ENCODE measurements at regions of chr11 and their contacts with region 1.

Region 1: DNA sequence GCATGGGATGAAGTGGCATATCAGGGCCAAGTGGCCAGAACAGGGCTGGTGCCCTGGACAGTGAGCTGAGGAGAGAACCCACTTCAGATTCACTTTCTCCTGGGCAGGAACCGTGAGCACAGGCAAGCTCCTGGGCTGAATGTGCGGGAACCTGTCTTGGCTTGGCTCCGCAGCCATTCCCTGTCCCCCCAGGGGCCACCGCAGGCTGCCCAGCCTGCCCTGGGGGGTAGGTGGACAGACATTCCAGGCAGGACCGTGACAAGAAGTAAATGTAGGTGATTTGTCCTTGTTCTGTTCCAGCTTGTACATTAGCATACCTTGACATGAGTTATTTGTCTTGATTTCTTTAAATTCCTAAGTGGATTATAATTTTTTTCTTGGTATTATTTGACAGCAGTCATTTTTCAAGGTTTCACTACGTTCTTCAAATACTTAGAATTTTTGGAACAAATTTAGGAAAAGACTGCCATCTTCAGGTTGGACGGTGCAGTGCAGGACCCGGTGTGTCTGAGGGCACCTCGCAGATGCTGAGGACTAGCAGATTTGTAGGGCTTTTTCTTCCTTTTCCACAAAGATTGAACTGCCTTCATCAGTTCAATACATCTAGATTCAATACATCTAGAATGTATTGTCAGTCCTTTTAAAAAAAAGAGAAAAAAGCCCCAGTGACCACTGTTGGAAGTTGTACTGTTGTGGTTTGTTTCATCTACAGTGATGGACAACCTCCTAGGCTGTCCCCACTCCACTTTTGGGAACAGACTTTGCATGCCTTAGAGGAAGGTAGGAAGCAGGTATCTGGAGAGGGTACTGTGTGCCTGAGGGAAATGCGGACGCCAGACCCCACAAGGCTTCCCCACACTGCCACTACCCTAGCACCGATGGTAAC is 115.1 kb upstream of the RASSF10 start:
- DNase-seq: peak in 7 of 9 donors; percentile 12 to 53 (median 39)
- ATAC-seq: peak; percentile 55
- H3K4me3 ChIP-seq: no peak overlapping the region
- H3K4me3 Mint-ChIP-seq: no peak overlapping the region
- H3K27ac ChIP-seq: no peak overlapping the region
- H3K27ac Mint-ChIP-seq: no peak overlapping the region
- H3K4me1 ChIP-seq: no peaks in the 10 kb centered on the region
- H3K4me1 Mint-ChIP-seq: no peaks in the 10 kb centered on the region
- H3K27me3 ChIP-seq: no peaks in the 10 kb centered on the region
- H3K27me3 Mint-ChIP-seq: peaks cover 17 to 29% (median 22%) of the 10 kb centered on the region in 5 donors

Region 2: GRCh38 chr11:12043959-12044819 is 849.8 kb before region 1 on chr11:
- CTCF ChIA-PET with region 1: no interaction called
- POLR2A ChIA-PET with region 1: no interaction called
- intact Hi-C with region 1: loop called (anchors 1 to 10 kb)
- DNase-seq: peak; percentile 17 to 64 (median 44)
- ATAC-seq: peak; percentile 74
- H3K4me3 ChIP-seq: no peak overlapping the region
- H3K4me3 Mint-ChIP-seq: no peak overlapping the region
- H3K27ac ChIP-seq: no peak overlapping the region
- H3K27ac Mint-ChIP-seq: peak overlapping the region in 1 of 9 donors; percentile 58
- H3K4me1 ChIP-seq: peaks cover 0 to 3% of the 10 kb centered on the region in 2 donors
- H3K4me1 Mint-ChIP-seq: peaks cover 0 to 9% (median 0%) of the 10 kb centered on the region in 7 donors
- H3K27me3 ChIP-seq: no peaks in the 10 kb centered on the region
- H3K27me3 Mint-ChIP-seq: peaks cover 0 to 7% (median 0%) of the 10 kb centered on the region in 5 donors

Region 3: DNA sequence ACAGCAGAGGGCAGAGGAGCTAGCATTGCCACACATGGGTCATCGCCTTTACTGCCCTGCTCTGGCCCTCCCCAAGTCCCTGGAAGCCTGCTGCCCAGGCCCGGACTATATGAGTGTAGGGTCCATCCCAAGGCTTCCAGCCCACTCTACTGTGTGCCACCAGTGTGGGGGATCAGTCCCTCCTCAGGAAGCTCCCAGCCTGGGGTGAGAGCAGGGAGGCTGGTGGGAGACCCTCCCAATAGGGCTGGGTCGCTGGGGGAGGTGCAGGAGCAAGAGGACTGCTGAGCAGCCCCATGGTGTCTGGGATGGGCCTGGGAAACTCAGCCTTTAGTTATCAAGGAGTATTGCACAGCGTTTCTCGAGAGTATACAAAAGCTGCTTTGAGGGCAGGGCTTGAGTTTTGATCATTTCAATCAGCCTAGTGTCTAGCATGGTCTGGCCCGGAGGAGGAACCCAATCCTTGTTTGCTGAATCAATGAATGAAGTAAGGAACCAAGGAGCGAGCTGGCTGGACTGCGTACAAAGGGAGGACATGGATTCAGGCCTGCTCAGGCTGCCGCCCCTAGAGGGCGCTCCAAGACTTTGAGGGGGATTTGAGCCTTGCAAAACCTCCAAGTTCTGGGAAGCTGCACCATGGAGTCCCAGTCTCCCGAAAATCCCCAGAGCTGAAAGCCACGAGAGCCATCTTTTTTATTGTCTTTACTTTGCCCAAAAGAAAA is 605.7 kb before region 1 on chr11:
- CTCF ChIA-PET with region 1: interaction called, 18 read pairs
- POLR2A ChIA-PET with region 1: interaction called, 4 read pairs
- intact Hi-C with region 1: loop called (anchors 1 kb)
- DNase-seq: peak in 6 of 9 donors; percentile 13 to 59 (median 30)
- ATAC-seq: peak; percentile 50
- H3K4me3 ChIP-seq: no peak overlapping the region
- H3K4me3 Mint-ChIP-seq: no peak overlapping the region
- H3K27ac ChIP-seq: no peak overlapping the region
- H3K27ac Mint-ChIP-seq: no peak overlapping the region
- H3K4me1 ChIP-seq: peaks cover 5 to 6% of the 10 kb centered on the region in 2 donors
- H3K4me1 Mint-ChIP-seq: peaks cover 5 to 19% (median 14%) of the 10 kb centered on the region in 7 donors
- H3K27me3 ChIP-seq: no peaks in the 10 kb centered on the region
- H3K27me3 Mint-ChIP-seq: no peaks in the 10 kb centered on the region

Region 4: DNA sequence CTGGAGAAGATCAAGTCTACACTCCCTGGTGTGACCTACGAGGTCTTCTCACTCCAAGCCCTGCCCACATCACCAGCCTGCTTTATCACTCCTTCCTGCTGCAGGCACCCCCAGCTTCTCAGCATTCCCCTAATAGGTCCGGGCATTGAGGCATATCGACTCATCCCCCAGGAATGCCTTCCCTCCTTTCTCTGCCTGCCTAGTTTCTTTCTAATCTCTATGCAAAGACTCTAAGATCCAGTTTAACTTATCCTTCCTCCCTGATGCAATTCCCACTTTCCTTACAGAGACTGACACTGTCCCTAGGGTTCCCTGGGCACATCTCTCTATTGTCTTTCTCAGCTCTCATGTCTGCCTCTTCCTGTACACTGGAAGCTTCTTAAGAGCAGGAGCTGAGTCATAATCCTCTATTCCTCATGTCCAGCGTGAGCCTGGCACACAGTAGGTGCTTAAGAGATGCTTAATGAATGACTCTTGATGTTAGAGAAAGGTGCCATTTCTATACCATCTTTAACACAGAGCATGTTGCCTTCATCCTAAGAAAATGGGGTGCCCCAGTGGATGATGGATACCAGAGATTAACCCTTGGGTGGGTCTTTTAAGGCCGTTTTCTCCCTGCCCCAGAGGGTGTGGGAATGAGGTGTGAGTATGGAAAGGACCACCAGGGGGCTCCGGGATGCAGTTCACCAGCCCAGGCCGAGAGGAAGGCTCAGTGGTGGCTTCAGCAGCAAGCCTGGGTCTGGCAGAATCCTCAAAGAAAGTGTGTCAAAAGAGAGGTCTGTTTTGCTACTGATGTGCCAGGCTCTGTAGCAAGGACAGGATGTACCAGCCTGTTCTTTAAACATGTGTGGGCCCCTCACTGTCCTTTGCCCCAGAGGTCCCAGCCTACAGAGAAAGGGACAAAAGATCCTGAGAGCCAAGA is 482.0 kb before region 1 on chr11:
- CTCF ChIA-PET with region 1: interaction called, 3 read pairs
- POLR2A ChIA-PET with region 1: no interaction called
- intact Hi-C with region 1: loop called in 1 of 2 experiments (anchors 5 kb)
- DNase-seq: peak in 5 of 9 donors; percentile 8 to 27 (median 22)
- ATAC-seq: no peak
- H3K4me3 ChIP-seq: no peak overlapping the region
- H3K4me3 Mint-ChIP-seq: no peak overlapping the region
- H3K27ac ChIP-seq: no peak overlapping the region
- H3K27ac Mint-ChIP-seq: no peak overlapping the region
- H3K4me1 ChIP-seq: no peaks in the 10 kb centered on the region
- H3K4me1 Mint-ChIP-seq: no peaks in the 10 kb centered on the region
- H3K27me3 ChIP-seq: no peaks in the 10 kb centered on the region
- H3K27me3 Mint-ChIP-seq: peaks cover 0 to 19% (median 15%) of the 10 kb centered on the region in 5 donors

Region 5: DNA sequence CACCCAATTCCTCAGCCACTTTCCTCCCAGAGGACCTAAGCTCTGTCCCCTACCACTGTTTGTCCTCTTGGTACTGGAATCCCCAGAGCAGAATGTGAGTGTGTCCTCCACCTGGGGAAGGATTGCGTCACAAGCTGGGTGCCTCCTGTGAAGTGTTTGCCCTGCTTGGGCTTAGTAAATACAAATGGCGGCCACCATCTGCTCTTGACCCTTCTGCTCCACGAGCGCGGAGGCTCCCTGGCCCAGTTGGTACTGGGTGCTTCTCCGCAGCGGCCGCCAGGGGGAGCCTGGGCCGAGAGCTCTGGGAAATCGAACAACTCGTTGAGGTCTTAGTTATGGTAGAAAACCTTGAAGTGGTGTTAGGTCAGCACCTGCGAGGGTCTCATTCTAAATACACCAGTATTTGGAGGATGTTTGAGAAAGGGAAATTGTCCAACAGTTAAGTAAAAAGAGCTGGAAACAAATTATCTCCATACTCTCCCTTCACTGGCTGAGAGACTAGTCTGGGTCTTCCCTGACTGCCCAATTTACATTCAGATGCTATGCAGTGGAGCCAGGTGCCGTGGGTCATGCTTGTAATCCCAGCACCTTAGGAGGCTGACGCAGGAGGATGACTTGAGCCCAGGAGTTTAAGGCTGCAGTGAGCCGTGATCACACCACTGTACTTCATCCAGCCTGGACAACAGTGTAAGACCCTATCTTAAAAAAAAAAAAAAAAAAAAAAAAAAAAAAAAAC is 294.5 kb before region 1 on chr11:
- CTCF ChIA-PET with region 1: interaction called, 3 read pairs
- POLR2A ChIA-PET with region 1: no interaction called
- intact Hi-C with region 1: loop called (anchors 1 to 5 kb)
- DNase-seq: peak in 5 of 9 donors; percentile 8 to 57 (median 13)
- ATAC-seq: peak; percentile 26
- H3K4me3 ChIP-seq: no peak overlapping the region
- H3K4me3 Mint-ChIP-seq: no peak overlapping the region
- H3K27ac ChIP-seq: no peak overlapping the region
- H3K27ac Mint-ChIP-seq: peak overlapping the region in 1 of 9 donors; percentile 25
- H3K4me1 ChIP-seq: peaks cover 0 to 17% of the 10 kb centered on the region in 2 donors
- H3K4me1 Mint-ChIP-seq: peaks cover 3 to 25% (median 18%) of the 10 kb centered on the region in 7 donors
- H3K27me3 ChIP-seq: no peaks in the 10 kb centered on the region
- H3K27me3 Mint-ChIP-seq: peaks cover 16 to 45% (median 28%) of the 10 kb centered on the region in 5 donors

Region 6: GRCh38 chr11:12853652-12854296 is 40.3 kb before region 1 on chr11:
- CTCF ChIA-PET with region 1: no interaction called
- POLR2A ChIA-PET with region 1: no interaction called
- intact Hi-C with region 1: loop called in 1 of 2 experiments (anchors 1 kb)
- DNase-seq: no peak
- ATAC-seq: no peak
- H3K4me3 ChIP-seq: no peak overlapping the region
- H3K4me3 Mint-ChIP-seq: no peak overlapping the region
- H3K27ac ChIP-seq: no peak overlapping the region
- H3K27ac Mint-ChIP-seq: no peak overlapping the region
- H3K4me1 ChIP-seq: no peaks in the 10 kb centered on the region
- H3K4me1 Mint-ChIP-seq: peaks cover 0 to 9% (median 0%) of the 10 kb centered on the region in 7 donors
- H3K27me3 ChIP-seq: no peaks in the 10 kb centered on the region
- H3K27me3 Mint-ChIP-seq: peaks cover 20 to 45% (median 21%) of the 10 kb centered on the region in 5 donors

Region 7: DNA sequence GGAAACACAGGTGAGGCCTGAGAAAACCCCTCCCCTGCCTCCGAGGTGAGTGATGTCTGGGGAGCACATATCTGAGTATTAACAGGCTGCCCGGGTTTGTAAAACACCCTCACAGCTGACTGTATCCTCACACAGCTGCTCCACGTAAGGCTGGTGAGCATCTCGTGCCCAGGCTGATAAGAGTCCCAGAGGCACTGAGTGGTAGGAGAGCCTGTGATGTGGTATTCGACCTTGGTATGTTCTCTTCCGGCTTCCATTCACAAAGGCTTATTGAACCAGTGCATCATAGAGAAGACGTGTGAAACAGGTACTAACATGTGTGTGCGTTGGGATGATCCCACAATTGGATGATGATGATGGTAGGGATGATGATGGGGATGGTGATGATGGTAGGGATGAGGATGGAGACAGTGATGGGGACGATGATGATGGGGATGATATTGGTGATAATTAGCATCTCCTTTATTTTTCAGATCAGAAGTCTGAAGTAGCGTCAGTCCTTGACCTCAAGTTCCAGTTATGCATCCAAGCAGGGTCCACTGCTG is 186.9 kb after region 1 on chr11:
- CTCF ChIA-PET with region 1: no interaction called
- POLR2A ChIA-PET with region 1: no interaction called
- intact Hi-C with region 1: no loop called
- DNase-seq: no peak
- ATAC-seq: no peak
- H3K4me3 ChIP-seq: no peak overlapping the region
- H3K4me3 Mint-ChIP-seq: no peak overlapping the region
- H3K27ac ChIP-seq: no peak overlapping the region
- H3K27ac Mint-ChIP-seq: no peak overlapping the region
- H3K4me1 ChIP-seq: no peaks in the 10 kb centered on the region
- H3K4me1 Mint-ChIP-seq: no peaks in the 10 kb centered on the region
- H3K27me3 ChIP-seq: no peaks in the 10 kb centered on the region
- H3K27me3 Mint-ChIP-seq: peaks cover 17 to 68% (median 54%) of the 10 kb centered on the region in 5 donors

Measured in naive thymus-derived CD4-positive, alpha-beta T cell (primary cell).